ENCODE measurements at regions of chr5 and their contacts with region 1.

Region 1: GRCh38 chr5:43120720-43121564 is at the start of gene ZNF131:
- DNase-seq: peak; percentile 95 to 99 (median 98)
- ATAC-seq: peak; percentile 93
- H3K4me3 ChIP-seq: peak within 1 kb of the TSS; percentile 70
- H3K4me3 Mint-ChIP-seq: peak within 1 kb of the TSS; percentile 89 to 98 (median 96)
- H3K27ac ChIP-seq: peak within 1 kb of the TSS; percentile 97
- H3K27ac Mint-ChIP-seq: peak within 1 kb of the TSS; percentile 86 to 99 (median 96)
- H3K4me1 ChIP-seq: peaks cover 27 to 30% of the 10 kb centered on the region in 2 donors
- H3K4me1 Mint-ChIP-seq: peaks cover 22 to 47% (median 44%) of the 10 kb centered on the region in 7 donors
- H3K27me3 ChIP-seq: no peaks in the 10 kb centered on the region
- H3K27me3 Mint-ChIP-seq: peaks cover 0 to 4% (median 0%) of the 10 kb centered on the region in 5 donors
- total RNA-seq, gene ZNF131: 47.2 to 83.4 (median 67.8) TPM

Region 2: DNA sequence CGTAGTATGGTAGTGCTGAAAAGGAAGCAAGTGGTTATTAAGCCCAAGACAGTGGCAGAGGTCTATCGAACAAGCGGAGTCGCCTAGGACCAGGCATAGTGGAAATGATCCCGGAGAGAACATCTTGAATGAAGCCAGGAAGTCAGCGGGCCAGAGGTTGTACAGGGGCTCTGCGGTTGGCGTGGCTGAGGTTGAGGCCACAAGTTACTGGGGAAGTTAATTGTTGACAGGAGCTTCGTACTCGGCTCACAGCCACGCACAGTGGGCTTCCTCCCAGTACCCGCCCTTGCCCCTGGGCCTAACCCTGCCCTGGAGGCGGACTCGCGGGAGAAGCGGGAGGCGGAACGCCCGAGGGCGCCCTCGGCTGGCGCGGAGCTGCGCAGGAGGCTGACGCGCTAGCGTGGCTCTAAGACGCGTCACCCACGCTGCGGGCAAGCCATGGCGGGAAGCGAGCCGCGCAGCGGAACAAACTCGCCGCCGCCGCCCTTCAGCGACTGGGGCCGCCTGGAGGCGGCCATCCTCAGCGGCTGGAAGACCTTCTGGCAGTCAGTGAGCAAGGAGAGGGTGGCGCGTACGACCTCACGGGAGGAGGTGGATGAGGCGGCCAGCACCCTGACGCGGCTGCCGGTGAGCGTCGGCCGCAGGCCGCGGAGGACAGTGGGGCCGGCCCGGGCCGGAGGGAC is 1195.9 kb before region 1 on chr5 and contains the start of gene FBXO4:
- CTCF ChIA-PET with region 1: no interaction called
- POLR2A ChIA-PET with region 1: no interaction called
- intact Hi-C with region 1: loop called in 1 of 2 experiments (anchors 1 kb)
- DNase-seq: peak; percentile 79 to 92 (median 88)
- ATAC-seq: peak; percentile 97
- H3K4me3 ChIP-seq: peak within 1 kb of the TSS; percentile 85
- H3K4me3 Mint-ChIP-seq: peak within 1 kb of the TSS; percentile 83 to 93 (median 88)
- H3K27ac ChIP-seq: peak within 1 kb of the TSS; percentile 96
- H3K27ac Mint-ChIP-seq: peak within 1 kb of the TSS; percentile 93 to 100 (median 97)
- H3K4me1 ChIP-seq: peaks cover 6 to 14% of the 10 kb centered on the region in 2 donors
- H3K4me1 Mint-ChIP-seq: peaks cover 9 to 43% (median 25%) of the 10 kb centered on the region in 7 donors
- H3K27me3 ChIP-seq: no peaks in the 10 kb centered on the region
- H3K27me3 Mint-ChIP-seq: no peaks in the 10 kb centered on the region
- total RNA-seq, gene FBXO4: 10.9 to 15.0 (median 14.6) TPM

Region 3: DNA sequence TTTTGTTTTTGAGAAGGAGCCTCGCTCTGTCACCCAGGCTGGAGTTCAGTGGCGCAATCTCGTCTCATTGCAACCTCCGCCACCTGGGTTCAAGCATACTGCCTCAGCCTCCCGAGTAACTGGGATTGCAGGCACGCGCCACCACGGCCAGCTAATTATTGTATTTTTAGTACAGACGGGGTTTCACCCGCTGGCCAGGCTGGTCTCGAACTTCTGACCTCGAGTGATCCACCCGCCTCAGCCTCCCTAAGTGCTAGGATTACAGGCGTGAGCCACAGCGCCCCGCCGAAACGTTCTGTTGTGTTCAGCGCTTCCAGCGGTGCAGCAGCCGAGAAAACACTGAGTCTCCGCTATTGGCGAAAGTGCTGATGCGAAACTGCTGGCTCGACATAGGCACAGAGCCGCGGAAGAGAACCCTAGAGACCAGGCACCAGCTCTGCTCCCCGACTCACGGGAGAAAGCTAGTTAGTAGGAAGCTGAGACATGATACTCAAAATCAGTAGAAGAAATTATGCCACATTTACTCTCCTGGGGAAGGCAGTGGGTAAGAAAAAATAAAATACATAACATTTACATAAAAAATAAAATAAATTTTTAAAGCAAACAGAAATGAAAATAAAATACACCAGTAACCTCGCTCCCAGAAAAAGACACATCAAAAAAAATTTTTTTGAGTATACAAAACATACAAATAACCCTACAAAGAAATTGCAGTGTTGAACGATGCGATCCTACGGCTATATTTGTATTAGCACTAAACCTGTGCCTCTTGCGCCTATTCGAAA is 112.4 kb before region 1 on chr5:
- CTCF ChIA-PET with region 1: interaction called, 3 read pairs
- POLR2A ChIA-PET with region 1: interaction called, 63 read pairs
- intact Hi-C with region 1: loop called (anchors 1 kb)
- DNase-seq: peak; percentile 79 to 95 (median 90)
- ATAC-seq: peak; percentile 78
- H3K4me3 ChIP-seq: peak overlapping the region; percentile 72
- H3K4me3 Mint-ChIP-seq: peak overlapping the region; percentile 85 to 98 (median 92)
- H3K27ac ChIP-seq: peak overlapping the region; percentile 92
- H3K27ac Mint-ChIP-seq: peak overlapping the region; percentile 96 to 100 (median 98)
- H3K4me1 ChIP-seq: peaks cover 22 to 24% of the 10 kb centered on the region in 2 donors
- H3K4me1 Mint-ChIP-seq: peaks cover 17 to 47% (median 29%) of the 10 kb centered on the region in 7 donors
- H3K27me3 ChIP-seq: no peaks in the 10 kb centered on the region
- H3K27me3 Mint-ChIP-seq: peaks cover 0 to 4% (median 0%) of the 10 kb centered on the region in 5 donors

Region 4: DNA sequence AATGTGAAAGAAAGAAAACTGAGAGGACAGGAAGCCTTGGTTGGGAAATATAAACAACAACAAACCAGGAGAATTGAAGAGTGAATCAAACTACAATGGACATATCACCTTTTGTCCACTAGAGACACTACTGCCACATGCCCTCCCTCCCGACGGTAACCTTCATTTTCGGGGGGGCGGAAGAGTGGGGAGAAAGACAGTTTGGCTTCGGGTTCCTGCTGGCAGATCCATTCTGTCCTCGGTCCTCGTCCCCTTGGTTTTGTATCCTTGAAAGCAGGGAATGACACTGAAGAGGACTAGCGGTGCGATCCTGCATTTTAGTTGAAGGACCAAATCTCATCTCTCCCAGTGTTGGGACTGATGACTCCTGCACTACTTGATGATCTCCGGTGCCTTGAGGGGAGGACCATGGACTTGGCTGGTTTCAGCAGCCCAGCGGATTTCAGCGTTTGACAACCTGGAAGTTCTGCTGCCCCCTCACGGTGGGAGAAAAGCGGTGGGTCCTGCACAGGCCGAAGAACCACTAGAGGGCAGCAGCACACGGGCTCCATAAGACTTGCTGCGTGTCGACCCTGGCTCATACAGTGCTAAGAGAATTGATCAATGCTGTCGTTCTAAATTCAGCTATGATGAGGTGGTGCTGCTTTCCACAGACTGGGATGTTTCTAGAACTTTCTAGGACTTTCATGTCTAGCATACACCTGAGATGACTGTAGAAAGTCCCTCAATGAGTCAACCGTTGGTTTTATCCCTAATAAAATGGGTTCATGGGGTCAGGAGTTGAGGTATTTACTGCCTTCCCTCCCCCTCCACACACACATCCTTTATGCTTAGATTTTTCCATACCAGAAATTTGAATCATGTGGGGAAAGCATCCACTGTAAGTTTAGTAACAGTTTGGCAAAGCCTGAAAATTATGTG is 15.3 kb before region 1 on chr5:
- CTCF ChIA-PET with region 1: interaction called, 42 read pairs
- POLR2A ChIA-PET with region 1: interaction called, 210 read pairs
- intact Hi-C with region 1: loop called (anchors 1 kb)
- DNase-seq: peak; percentile 75 to 90 (median 85)
- ATAC-seq: peak; percentile 99
- H3K4me3 ChIP-seq: peak overlapping the region; percentile 66
- H3K4me3 Mint-ChIP-seq: peak overlapping the region; percentile 77 to 93 (median 89)
- H3K27ac ChIP-seq: peak overlapping the region; percentile 59
- H3K27ac Mint-ChIP-seq: peak overlapping the region; percentile 43 to 92 (median 88)
- H3K4me1 ChIP-seq: peaks cover 6 to 22% of the 10 kb centered on the region in 2 donors
- H3K4me1 Mint-ChIP-seq: peaks cover 21 to 49% (median 38%) of the 10 kb centered on the region in 7 donors
- H3K27me3 ChIP-seq: no peaks in the 10 kb centered on the region
- H3K27me3 Mint-ChIP-seq: no peaks in the 10 kb centered on the region

Region 5: DNA sequence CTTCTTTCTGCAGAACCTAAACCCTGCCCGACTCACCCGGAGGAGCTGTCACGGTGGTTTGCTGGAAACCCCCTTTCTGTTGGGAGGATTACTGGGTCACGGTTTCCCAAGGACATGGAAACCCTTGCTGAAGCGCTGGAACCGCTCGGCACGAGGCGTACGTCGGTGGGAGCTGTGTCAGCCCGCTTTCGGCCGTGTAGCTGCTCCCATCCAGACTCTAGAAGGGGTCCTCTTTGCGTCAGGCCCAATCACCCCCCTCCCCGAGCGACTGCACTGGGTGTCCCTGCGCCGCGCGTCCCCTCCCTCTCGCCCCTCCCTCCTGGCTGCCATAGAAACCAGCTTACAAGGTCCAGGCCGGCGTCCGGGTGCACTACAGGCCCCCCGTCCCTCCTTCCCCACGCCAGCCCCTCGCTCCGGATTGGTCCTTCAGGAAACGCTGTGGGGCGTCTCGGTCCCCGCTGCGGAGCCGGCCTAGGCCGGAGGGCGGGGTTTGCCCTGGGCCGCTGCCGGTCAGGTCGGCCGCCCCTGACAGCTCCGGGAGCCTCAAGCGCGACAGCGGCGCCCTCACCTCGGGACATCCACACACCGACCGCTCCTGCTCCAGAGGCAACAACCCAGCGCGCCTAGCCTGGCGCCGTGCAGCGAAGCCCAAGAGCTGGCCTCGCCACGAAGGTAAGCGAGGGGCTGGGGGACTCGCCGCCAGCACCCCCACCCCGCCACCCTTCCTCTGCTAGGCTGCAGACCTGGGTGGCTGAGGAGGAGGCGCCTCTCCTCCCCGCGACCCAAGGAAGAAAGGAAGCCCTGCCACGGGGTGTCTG is 71.0 kb after region 1 on chr5 and contains the start of gene NIM1K:
- CTCF ChIA-PET with region 1: no interaction called
- POLR2A ChIA-PET with region 1: no interaction called
- intact Hi-C with region 1: loop called (anchors 1 kb)
- DNase-seq: peak in 8 of 9 donors; percentile 7 to 55 (median 16)
- ATAC-seq: peak; percentile 51
- H3K4me3 ChIP-seq: peak within 1 kb of the TSS; percentile 63
- H3K4me3 Mint-ChIP-seq: peak within 1 kb of the TSS; percentile 81 to 94 (median 88)
- H3K27ac ChIP-seq: no peak within 1 kb of the TSS
- H3K27ac Mint-ChIP-seq: peak within 1 kb of the TSS in 6 of 9 donors; percentile 21 to 86 (median 71)
- H3K4me1 ChIP-seq: peaks cover 4 to 18% of the 10 kb centered on the region in 2 donors
- H3K4me1 Mint-ChIP-seq: peaks cover 11 to 33% (median 23%) of the 10 kb centered on the region in 7 donors
- H3K27me3 ChIP-seq: peaks cover 0 to 5% of the 10 kb centered on the region in 2 donors
- H3K27me3 Mint-ChIP-seq: peaks cover 15 to 22% (median 19%) of the 10 kb centered on the region in 5 donors
- total RNA-seq, gene NIM1K: 0.40 to 0.97 (median 0.61) TPM

Region 6: GRCh38 chr5:43514816-43515677 is 394.1 kb after region 1 on chr5 and contains the start of gene C5orf34:
- CTCF ChIA-PET with region 1: no interaction called
- POLR2A ChIA-PET with region 1: no interaction called
- intact Hi-C with region 1: loop called (anchors 1 kb)
- DNase-seq: peak; percentile 84 to 94 (median 89)
- ATAC-seq: peak; percentile 97
- H3K4me3 ChIP-seq: peak within 1 kb of the TSS; percentile 84
- H3K4me3 Mint-ChIP-seq: peak within 1 kb of the TSS; percentile 90 to 97 (median 94)
- H3K27ac ChIP-seq: peak within 1 kb of the TSS; percentile 81
- H3K27ac Mint-ChIP-seq: peak within 1 kb of the TSS; percentile 90 to 98 (median 95)
- H3K4me1 ChIP-seq: peaks cover 8 to 14% of the 10 kb centered on the region in 2 donors
- H3K4me1 Mint-ChIP-seq: peaks cover 17 to 42% (median 36%) of the 10 kb centered on the region in 7 donors
- H3K27me3 ChIP-seq: no peaks in the 10 kb centered on the region
- H3K27me3 Mint-ChIP-seq: no peaks in the 10 kb centered on the region
- total RNA-seq, gene C5orf34: 1.1 to 5.2 (median 3.3) TPM

Measured in naive thymus-derived CD4-positive, alpha-beta T cell (primary cell).